Caki2 (cell line): ENCODE measurements at regions of chr20 and their contacts with region 1.

Region 1: DNA sequence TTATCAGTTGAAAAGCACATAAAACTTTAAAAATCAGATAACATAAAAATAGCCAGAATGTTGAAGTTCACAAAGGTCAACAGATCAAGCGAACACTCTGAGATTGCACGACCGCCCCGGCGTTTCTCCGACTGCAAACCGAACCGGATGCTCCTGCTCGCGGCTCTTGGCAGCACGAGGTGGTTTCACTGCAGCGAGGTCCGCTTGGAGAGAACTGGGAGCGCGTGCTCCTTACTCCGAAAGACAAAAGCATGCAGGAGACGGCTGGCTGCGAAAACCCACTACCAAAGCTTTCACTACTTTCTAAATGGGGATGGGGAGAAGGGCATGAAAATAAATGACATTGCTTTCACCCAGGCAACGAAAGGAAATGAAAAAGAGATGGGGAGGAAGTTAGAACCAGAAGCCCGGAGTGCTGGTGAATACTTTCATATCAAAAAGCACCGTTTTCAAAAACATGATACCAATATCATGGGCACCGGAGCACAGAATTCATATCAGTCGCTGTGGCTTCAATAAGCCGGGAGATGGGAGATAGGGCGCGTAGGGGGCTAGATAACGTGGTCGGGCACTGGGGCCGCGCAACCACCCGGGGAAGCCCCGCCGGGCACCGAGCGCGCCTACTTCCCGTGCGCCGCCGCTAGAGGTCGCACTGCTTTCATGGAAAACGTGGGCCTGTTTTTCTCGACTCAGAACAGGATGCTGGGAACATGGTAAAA is 8.3 kb upstream of the ANKRD60 start:
- DNase-seq: peak; percentile 65

Region 2: GRCh38 chr20:58028123-58028522 is 208.6 kb before region 1 on chr20:
- in situ Hi-C with region 1: no loop called
- DNase-seq: no peak

Region 3: GRCh38 chr20:58179432-58180099 is 57.2 kb before region 1 on chr20:
- in situ Hi-C with region 1: no loop called
- DNase-seq: peak; percentile 62

Region 4: GRCh38 chr20:58309575-58310290 is 73.0 kb after region 1 on chr20 and contains the start of gene RAB22A:
- in situ Hi-C with region 1: no loop called
- DNase-seq: peak; percentile 69
- total RNA-seq, gene RAB22A: 9.4 and 11.7 TPM in 2 replicates

Region 5: GRCh38 chr20:58649286-58650180 is 412.8 kb after region 1 on chr20:
- in situ Hi-C with region 1: loop called (anchors 10 kb)
- DNase-seq: no peak

Region 6: DNA sequence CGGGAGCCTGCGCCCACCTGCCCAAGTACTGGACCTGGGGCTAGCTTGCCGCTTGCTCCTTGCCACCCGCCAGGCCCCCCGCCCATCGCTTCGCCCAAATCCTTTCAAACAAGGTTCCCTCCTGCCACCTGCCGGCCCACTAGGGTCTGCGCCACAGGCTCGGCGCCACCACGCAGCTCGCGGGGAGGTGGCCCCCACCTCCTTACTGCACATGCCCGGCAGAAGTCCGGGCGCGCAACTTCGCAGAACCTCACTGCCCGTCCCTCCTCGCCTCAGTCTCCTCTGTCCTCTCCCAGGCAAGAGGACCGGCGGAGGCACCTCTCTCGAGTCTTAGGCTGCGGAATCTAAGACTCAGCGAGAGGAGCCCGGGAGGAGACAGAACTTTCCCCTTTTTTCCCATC is 602.7 kb after region 1 on chr20:
- in situ Hi-C with region 1: loop called (anchors 25 kb)
- DNase-seq: no peak